B cell (primary cell): ENCODE measurements at regions of chr4 and their contacts with region 1.

Region 1: DNA sequence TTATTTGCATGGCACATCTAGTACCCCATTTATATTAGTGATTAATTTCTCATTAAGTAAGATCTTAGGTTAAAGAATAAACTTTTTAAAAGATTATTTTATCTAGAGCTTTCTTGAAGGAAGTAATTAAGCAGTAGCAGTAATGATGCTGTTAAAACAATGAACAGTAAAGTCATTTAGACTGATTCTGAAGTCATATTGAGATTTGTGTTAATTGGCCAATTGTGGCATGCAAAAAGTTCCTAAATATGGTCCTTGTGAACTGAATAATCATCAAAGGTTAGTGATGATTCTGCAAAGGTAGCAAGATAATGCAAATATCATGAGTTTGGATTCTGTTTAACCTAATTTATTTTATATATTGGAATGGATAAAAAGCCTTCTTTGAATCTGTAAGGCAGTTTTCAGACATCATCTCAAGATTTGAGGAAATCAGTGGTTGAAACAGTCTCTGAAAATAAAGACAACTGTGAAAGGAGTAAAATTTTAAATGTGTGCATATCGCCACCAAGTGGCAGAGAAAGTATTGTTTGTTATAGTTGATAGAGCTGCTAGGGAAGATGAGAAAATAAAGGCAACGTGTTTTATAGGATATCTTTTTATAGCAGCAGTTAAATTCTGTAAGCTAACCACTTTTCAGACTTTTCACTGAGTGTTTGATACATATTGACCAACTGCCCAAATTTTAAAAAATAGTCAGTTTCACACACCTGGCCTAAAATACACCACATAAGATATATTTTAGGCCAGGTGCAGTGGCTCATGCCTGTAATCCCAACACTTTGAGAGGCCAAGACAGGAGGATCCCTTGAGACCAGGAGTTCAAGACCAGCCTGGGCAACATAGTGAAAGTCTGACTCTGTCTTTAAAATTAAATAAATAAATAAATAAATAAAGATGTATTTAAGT is 79.6 kb downstream of the CCKAR start:
- DNase-seq: peak; percentile 68
- ATAC-seq: peak; percentile 21
- H3K4me3 ChIP-seq: no peak overlapping the region
- H3K4me3 Mint-ChIP-seq: no peak overlapping the region
- H3K27ac ChIP-seq: no peak overlapping the region
- H3K27ac Mint-ChIP-seq: no peak overlapping the region
- H3K4me1 ChIP-seq: no peaks in the 10 kb centered on the region
- H3K4me1 Mint-ChIP-seq: no peaks in the 10 kb centered on the region
- H3K27me3 ChIP-seq: no peaks in the 10 kb centered on the region
- H3K27me3 Mint-ChIP-seq: no peaks in the 10 kb centered on the region
- CTCF ChIP-seq: peak; percentile 81

Region 2: GRCh38 chr4:25439918-25440477 is 970.6 kb before region 1 on chr4:
- CTCF ChIA-PET with region 1: interaction called, 4 read pairs
- POLR2A ChIA-PET with region 1: no interaction called
- intact Hi-C with region 1: loop called (anchors 2 kb)
- DNase-seq: peak; percentile 62
- ATAC-seq: peak; percentile 47
- H3K4me3 ChIP-seq: no peak overlapping the region
- H3K4me3 Mint-ChIP-seq: no peak overlapping the region
- H3K27ac ChIP-seq: no peak overlapping the region
- H3K27ac Mint-ChIP-seq: no peak overlapping the region
- H3K4me1 ChIP-seq: no peaks in the 10 kb centered on the region
- H3K4me1 Mint-ChIP-seq: no peaks in the 10 kb centered on the region
- H3K27me3 ChIP-seq: peaks cover 0 to 3% (median 1%) of the 10 kb centered on the region in 4 experiments
- H3K27me3 Mint-ChIP-seq: no peaks in the 10 kb centered on the region
- CTCF ChIP-seq: peak; percentile 87

Region 3: GRCh38 chr4:25986807-25987206 is 423.8 kb before region 1 on chr4:
- CTCF ChIA-PET with region 1: interaction called, 54 read pairs
- POLR2A ChIA-PET with region 1: no interaction called
- intact Hi-C with region 1: loop called (anchors 1 kb)
- DNase-seq: no peak
- ATAC-seq: no peak
- H3K4me3 ChIP-seq: no peak overlapping the region
- H3K4me3 Mint-ChIP-seq: no peak overlapping the region
- H3K27ac ChIP-seq: no peak overlapping the region
- H3K27ac Mint-ChIP-seq: no peak overlapping the region
- H3K4me1 ChIP-seq: peaks cover 5 to 21% of the 10 kb centered on the region in 2 donors
- H3K4me1 Mint-ChIP-seq: peaks cover 20% of the 10 kb centered on the region
- H3K27me3 ChIP-seq: peaks cover 0 to 6% (median 0%) of the 10 kb centered on the region in 4 experiments
- H3K27me3 Mint-ChIP-seq: peaks cover 5% of the 10 kb centered on the region
- CTCF ChIP-seq: no peak

Region 4: DNA sequence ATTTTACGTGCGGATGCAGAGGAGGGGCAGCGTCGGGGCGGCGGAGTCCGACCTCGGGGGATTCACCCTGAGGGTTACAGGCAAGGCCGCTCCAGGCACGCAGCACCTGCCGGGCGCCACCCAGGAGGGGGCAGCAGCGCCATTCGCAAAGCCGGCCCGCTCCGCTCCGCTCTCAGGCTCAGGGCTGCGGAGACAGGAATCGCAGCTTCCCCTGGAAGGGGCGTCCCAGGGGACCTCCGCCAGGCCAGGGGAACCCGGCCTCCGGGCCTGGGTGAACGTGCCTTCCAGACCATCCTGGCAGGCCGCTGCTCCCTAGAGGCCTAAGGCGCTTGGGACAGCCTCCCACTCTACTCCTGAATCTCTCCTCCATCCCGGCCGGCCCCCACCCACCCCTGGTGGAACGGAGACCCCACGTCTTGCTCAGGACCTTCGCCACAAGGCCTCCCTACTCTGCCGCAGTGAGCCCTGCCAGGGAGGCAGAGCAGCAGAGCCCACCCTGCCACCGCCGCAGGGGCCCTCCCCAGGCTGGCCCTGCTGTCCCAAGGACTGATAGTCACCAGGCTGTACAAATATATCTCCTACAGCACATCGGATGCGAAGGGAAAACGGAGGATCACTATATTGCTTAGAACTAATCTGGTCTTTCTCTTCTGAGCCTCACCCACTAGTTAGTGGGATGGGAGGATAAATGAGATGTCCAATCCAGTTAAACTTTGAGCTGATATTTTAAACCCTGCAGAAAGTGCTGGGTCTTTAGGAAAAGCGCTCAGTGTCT is 381.7 kb before region 1 on chr4:
- CTCF ChIA-PET with region 1: interaction called, 14 read pairs
- POLR2A ChIA-PET with region 1: no interaction called
- intact Hi-C with region 1: loop called (anchors 1 kb)
- DNase-seq: peak; percentile 64
- ATAC-seq: peak; percentile 87
- H3K4me3 ChIP-seq: no peak overlapping the region
- H3K4me3 Mint-ChIP-seq: no peak overlapping the region
- H3K27ac ChIP-seq: no peak overlapping the region
- H3K27ac Mint-ChIP-seq: no peak overlapping the region
- H3K4me1 ChIP-seq: peaks cover 5 to 8% of the 10 kb centered on the region in 2 donors
- H3K4me1 Mint-ChIP-seq: peaks cover 6% of the 10 kb centered on the region
- H3K27me3 ChIP-seq: peaks cover 0 to 17% (median 3%) of the 10 kb centered on the region in 4 experiments
- H3K27me3 Mint-ChIP-seq: peaks cover 18% of the 10 kb centered on the region
- CTCF ChIP-seq: peak; percentile 69

Region 5: DNA sequence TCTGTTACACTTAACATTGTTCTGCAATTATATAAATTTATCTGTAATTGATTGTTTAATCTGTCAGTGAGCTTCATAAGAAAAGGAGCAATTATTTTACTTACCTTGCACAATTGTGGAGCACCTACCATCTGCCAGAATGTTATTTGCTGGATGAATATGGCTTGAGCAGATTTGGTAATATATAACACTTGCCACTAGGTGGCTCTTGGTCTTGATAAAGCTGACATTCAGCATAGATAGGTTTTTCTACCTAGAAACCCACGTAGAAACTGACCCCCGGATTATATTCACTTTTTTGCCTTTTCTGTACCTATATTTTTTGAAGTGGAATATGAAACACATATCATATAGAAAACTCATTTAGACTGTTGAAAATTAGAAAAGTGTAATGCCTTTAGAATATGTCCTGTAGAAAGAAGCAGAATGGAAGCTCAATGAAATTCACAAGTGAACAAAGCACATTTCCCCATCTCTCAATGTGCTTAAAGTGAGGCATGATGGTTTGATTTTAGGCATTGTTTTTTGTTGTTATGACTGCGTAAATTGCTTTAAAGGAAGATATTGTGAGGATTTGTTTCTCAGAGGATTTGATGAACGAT is 80.4 kb before region 1 on chr4:
- CTCF ChIA-PET with region 1: interaction called, 86 read pairs
- POLR2A ChIA-PET with region 1: no interaction called
- intact Hi-C with region 1: loop called (anchors 1 kb)
- DNase-seq: peak; percentile 69
- ATAC-seq: peak; percentile 79
- H3K4me3 ChIP-seq: no peak overlapping the region
- H3K4me3 Mint-ChIP-seq: no peak overlapping the region
- H3K27ac ChIP-seq: no peak overlapping the region
- H3K27ac Mint-ChIP-seq: no peak overlapping the region
- H3K4me1 ChIP-seq: no peaks in the 10 kb centered on the region
- H3K4me1 Mint-ChIP-seq: peaks cover 26% of the 10 kb centered on the region
- H3K27me3 ChIP-seq: no peaks in the 10 kb centered on the region
- H3K27me3 Mint-ChIP-seq: no peaks in the 10 kb centered on the region
- CTCF ChIP-seq: peak; percentile 90